ENCODE measurements at regions of chr9 and their contacts with region 1.

Region 1: DNA sequence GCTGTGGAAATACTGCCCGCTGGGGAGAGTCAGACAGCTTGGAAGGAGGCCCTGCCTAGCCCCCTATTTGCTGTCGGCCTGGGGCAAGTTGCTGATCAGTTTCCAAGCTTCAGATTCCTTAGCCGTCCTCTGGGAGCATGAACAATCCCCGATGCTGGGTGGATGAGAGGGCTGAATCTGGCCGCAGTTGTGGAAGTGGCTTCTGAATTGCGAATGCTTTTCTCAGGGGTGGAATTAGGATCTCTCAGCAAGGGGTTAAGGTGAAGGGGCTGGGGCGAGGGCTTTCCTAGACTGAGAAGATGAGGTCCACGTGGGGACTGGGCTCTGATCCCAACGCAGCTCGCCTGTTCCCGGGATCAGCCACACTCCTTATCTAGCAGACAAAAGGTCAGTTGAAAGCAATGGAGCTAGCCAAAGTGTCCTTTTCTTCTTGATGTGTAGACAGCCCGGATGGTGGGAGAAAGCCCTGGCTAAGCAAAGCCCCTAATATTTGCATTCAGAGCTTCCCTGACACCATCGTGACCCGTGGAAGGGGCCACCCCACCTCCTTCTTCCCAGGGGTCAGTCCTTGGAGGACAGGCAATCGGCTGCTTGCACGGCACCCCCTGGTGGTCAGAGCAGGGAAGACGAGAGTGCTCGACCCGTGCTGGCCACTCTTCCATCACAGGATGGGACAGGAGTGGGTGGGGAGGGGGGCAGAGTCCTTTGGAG is 54.9 kb downstream of the COL15A1 start:
- DNase-seq: peak; percentile 50
- H3K4me3 ChIP-seq: no peak overlapping the region
- H3K27ac ChIP-seq: no peak overlapping the region
- H3K4me1 ChIP-seq: no peaks in the 10 kb centered on the region
- H3K27me3 ChIP-seq: peaks cover 0 to 10% of the 10 kb centered on the region in 2 experiments
- CTCF ChIP-seq: peak; percentile 77 to 90
- POLR2A ChIP-seq: no peak

Region 2: GRCh38 chr9:98627296-98627695 is 371.3 kb before region 1 on chr9:
- CTCF ChIA-PET with region 1: no interaction called
- POLR2A ChIA-PET with region 1: no interaction called
- dilution Hi-C with region 1: no loop called
- intact Hi-C with region 1: no loop called
- DNase-seq: no peak
- H3K4me3 ChIP-seq: no peak overlapping the region
- H3K27ac ChIP-seq: no peak overlapping the region
- H3K4me1 ChIP-seq: no peaks in the 10 kb centered on the region
- H3K27me3 ChIP-seq: no peaks in the 10 kb centered on the region
- CTCF ChIP-seq: no peak
- POLR2A ChIP-seq: no peak

Region 3: GRCh38 chr9:98807070-98807810 is 191.4 kb before region 1 on chr9 and contains the start of gene GALNT12:
- CTCF ChIA-PET with region 1: interaction called, 27 read pairs
- POLR2A ChIA-PET with region 1: no interaction called
- dilution Hi-C with region 1: no loop called
- intact Hi-C with region 1: no loop called
- DNase-seq: no peak
- H3K4me3 ChIP-seq: peak within 1 kb of the TSS; percentile 40 to 59 (median 40)
- H3K27ac ChIP-seq: no peak within 1 kb of the TSS
- H3K4me1 ChIP-seq: peaks cover 6% of the 10 kb centered on the region
- H3K27me3 ChIP-seq: peaks cover 22 to 28% of the 10 kb centered on the region in 2 experiments
- CTCF ChIP-seq: peak in 1 of 2 donors; percentile 2
- POLR2A ChIP-seq: no peak
- total RNA-seq, gene GALNT12: 0.42 and 0.44 TPM in 2 replicates

Region 4: GRCh38 chr9:98860871-98861293 is 137.7 kb before region 1 on chr9:
- CTCF ChIA-PET with region 1: interaction called, 68 read pairs
- POLR2A ChIA-PET with region 1: no interaction called
- dilution Hi-C with region 1: no loop called
- intact Hi-C with region 1: loop called (anchors 1 kb)
- DNase-seq: peak; percentile 24
- H3K4me3 ChIP-seq: no peak overlapping the region
- H3K27ac ChIP-seq: no peak overlapping the region
- H3K4me1 ChIP-seq: no peaks in the 10 kb centered on the region
- H3K27me3 ChIP-seq: peaks cover 2 to 6% of the 10 kb centered on the region in 2 experiments
- CTCF ChIP-seq: peak in 1 of 2 donors; percentile 11
- POLR2A ChIP-seq: no peak

Region 5: DNA sequence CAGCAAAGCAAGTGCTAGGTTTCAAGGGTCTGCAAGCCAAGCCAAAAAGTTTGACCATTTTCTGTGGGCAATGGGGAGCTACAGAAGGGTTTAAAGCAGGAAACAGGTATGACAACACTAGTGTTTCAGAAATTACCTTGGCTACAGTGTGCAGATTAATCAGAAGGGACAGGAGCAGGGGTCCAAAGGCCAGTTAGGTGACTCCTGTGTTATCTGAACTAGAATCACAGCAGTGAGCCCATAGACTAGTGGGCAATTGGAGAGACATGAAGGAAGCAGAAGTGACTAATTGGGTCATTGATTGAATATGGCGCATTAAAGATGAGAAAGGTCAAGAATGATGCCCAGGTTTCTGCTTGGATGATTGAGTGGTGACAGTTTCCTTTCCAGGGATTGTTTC is 64.9 kb after region 1 on chr9:
- CTCF ChIA-PET with region 1: no interaction called
- POLR2A ChIA-PET with region 1: no interaction called
- dilution Hi-C with region 1: no loop called
- intact Hi-C with region 1: no loop called
- DNase-seq: no peak
- H3K4me3 ChIP-seq: no peak overlapping the region
- H3K27ac ChIP-seq: no peak overlapping the region
- H3K4me1 ChIP-seq: no peaks in the 10 kb centered on the region
- H3K27me3 ChIP-seq: peaks cover 4 to 7% of the 10 kb centered on the region in 2 experiments
- CTCF ChIP-seq: no peak
- POLR2A ChIP-seq: no peak

Region 6: GRCh38 chr9:99104459-99105151 is 106.0 kb after region 1 on chr9 and contains the start of gene TGFBR1:
- CTCF ChIA-PET with region 1: interaction called, 11 read pairs
- POLR2A ChIA-PET with region 1: no interaction called
- dilution Hi-C with region 1: no loop called
- intact Hi-C with region 1: no loop called
- DNase-seq: peak; percentile 92
- H3K4me3 ChIP-seq: peak within 1 kb of the TSS; percentile 42 to 84 (median 57)
- H3K27ac ChIP-seq: peak within 1 kb of the TSS; percentile 38
- H3K4me1 ChIP-seq: peaks cover 13% of the 10 kb centered on the region
- H3K27me3 ChIP-seq: no peaks in the 10 kb centered on the region
- CTCF ChIP-seq: no peak
- POLR2A ChIP-seq: no peak
- total RNA-seq, gene TGFBR1: 17.7 and 18.6 TPM in 2 replicates

Region 7: DNA sequence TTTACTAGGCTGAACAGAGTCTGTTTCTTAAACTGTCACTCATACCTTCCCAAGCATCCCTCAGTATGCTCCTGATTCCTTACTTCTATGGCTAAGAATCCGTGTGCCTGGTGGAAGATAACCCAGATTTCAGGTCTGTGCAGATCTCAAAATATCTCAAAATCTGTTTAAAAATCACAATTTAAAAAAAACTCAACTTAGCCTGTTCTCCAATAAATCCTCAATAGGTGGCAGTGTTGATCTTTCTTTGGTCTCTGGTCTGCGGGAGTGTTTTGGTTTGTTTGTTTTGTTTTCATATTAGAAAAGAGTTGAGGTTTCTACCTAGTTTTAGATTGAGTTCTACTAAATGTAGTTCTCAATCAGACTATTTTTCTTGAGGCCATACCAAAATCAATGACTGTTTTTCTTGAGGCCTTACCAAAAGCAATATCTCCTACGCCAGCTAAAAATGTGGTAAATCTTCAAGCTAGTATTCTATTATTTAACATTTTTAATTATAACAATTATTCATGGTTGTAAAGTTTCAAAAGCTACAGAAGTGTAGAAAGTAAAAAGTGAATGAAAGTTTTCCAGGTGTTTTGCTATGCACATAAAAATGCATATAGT is 164.3 kb after region 1 on chr9:
- CTCF ChIA-PET with region 1: no interaction called
- POLR2A ChIA-PET with region 1: no interaction called
- dilution Hi-C with region 1: no loop called
- intact Hi-C with region 1: loop called (anchors 1 kb)
- DNase-seq: peak; percentile 62
- H3K4me3 ChIP-seq: no peak overlapping the region
- H3K27ac ChIP-seq: no peak overlapping the region
- H3K4me1 ChIP-seq: peaks cover 3% of the 10 kb centered on the region
- H3K27me3 ChIP-seq: peaks cover 2 to 7% of the 10 kb centered on the region in 2 experiments
- CTCF ChIP-seq: peak; percentile 43 to 44
- POLR2A ChIP-seq: no peak